Activated T-helper 1 cell treated with anti-CD3 and anti-CD28 coated beads, Interleukin-12 subunit alpha, Interleukin-12 subunit beta, Interleukin-2, Interleukin-4 antibody, amounts not matched to agents 30 ng/mL and 10 ng/mL and 1 ng/mL, durations not matched to agents 14 hours and 24 hours and 36 hours (primary cell): ENCODE measurements at regions of chr12 and their contacts with region 1.

Region 1: DNA sequence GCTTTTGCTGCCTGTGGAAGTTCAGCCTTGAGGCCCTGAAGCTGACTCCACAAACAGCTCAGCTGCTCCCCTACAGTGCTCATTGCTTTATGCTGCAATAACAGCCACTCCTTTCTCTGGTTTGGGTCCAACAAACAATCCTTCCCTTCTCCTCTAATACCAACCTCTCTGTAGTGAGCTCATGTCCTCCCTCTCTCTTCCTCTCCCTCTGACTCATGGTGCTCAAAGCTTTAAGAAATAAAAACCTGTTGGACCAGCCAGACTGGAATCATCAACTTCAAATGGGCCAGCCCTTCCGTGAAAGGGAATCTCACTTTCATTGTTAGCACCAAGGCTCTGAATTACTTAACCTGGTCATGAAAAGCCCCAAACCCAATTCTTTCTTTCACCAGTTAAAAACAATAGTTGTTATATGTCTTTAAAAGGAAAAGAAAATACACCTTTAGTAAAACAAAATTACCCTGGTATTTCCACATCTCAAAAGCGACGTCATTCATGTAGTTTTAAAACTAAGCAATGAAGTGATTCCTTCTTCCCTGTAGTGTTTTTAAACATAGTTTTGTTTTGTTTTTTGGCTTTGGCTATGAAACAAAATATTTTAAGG is 126.4 kb downstream of the DUSP6 start:
- DNase-seq: no peak
- H3K4me3 Mint-ChIP-seq: peak overlapping the region; percentile 73
- H3K27ac Mint-ChIP-seq: peak overlapping the region; percentile 99
- H3K4me1 Mint-ChIP-seq: peaks cover 82% of the 10 kb centered on the region
- H3K27me3 Mint-ChIP-seq: no peaks in the 10 kb centered on the region

Region 2: GRCh38 chr12:89019408-89020120 is 206.3 kb before region 1 on chr12:
- intact Hi-C with region 1: loop called (anchors 1 kb)
- DNase-seq: peak; percentile 73
- H3K4me3 Mint-ChIP-seq: no peak overlapping the region
- H3K27ac Mint-ChIP-seq: no peak overlapping the region
- H3K4me1 Mint-ChIP-seq: peaks cover 31% of the 10 kb centered on the region
- H3K27me3 Mint-ChIP-seq: peaks cover 12% of the 10 kb centered on the region

Region 3: DNA sequence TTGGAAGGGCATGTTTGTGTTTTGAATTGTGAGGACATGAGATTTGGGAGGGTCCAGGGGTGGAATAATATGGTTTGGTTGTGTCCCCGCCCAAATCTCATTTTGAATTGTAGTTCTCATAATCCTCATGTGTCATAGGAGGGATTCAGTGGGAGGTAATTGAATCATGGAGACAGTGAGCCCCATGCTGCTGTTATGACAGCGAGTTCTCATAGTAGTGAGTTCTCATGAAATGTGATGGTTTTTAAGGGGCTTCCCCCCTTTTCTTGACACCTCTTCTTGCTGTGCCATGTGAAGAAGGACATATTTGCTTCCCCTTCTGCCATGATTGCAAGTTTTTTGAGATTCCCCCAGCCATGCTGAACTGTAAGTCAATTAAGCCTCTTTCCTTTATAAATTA is 133.6 kb before region 1 on chr12:
- intact Hi-C with region 1: loop called (anchors 1 kb)
- DNase-seq: no peak
- H3K4me3 Mint-ChIP-seq: no peak overlapping the region
- H3K27ac Mint-ChIP-seq: peak overlapping the region; percentile 25
- H3K4me1 Mint-ChIP-seq: no peaks in the 10 kb centered on the region
- H3K27me3 Mint-ChIP-seq: no peaks in the 10 kb centered on the region

Region 4: GRCh38 chr12:89154743-89155499 is 71.0 kb before region 1 on chr12:
- intact Hi-C with region 1: no loop called
- DNase-seq: no peak
- H3K4me3 Mint-ChIP-seq: no peak overlapping the region
- H3K27ac Mint-ChIP-seq: no peak overlapping the region
- H3K4me1 Mint-ChIP-seq: peaks cover 27% of the 10 kb centered on the region
- H3K27me3 Mint-ChIP-seq: no peaks in the 10 kb centered on the region

Region 5: GRCh38 chr12:89210277-89210676 is 15.6 kb before region 1 on chr12:
- intact Hi-C with region 1: loop called (anchors 1 kb)
- DNase-seq: no peak
- H3K4me3 Mint-ChIP-seq: no peak overlapping the region
- H3K27ac Mint-ChIP-seq: no peak overlapping the region
- H3K4me1 Mint-ChIP-seq: peaks cover 50% of the 10 kb centered on the region
- H3K27me3 Mint-ChIP-seq: peaks cover 3% of the 10 kb centered on the region

Region 6: DNA sequence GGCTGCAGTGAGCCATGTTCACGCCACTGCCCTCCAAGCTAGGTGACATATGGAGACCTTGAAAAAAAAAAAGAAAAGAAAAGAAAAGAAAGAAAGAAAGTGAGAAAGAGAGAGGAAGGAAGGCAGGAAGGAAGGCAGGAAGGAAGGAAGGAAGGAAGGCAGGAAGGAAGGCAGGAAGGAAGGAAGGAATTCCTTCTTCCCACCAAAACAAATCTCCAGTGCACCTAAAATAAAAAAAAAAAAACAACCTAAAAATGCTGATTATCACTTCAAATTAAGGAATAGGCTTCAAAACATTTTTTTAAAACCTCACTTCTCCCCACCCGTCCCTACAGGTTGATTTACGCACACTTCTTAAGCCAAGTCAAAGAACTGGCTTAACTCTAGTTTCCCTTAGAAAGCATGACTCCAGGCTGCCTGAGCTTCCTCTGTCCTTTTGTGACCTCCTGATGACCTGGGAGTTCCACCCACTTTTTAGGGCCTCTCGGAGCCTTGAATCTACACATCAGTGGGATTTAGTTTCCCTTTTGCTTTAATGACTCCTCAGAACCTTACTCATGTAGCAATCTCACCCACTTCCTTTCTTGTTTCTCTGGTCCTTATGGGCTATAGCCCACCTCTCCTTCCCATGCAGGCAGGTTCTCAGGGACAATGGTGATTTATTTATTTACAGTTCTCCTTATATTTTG is 107.8 kb after region 1 on chr12:
- intact Hi-C with region 1: loop called (anchors 1 kb)
- DNase-seq: no peak
- H3K4me3 Mint-ChIP-seq: peak overlapping the region; percentile 46
- H3K27ac Mint-ChIP-seq: peak overlapping the region; percentile 76
- H3K4me1 Mint-ChIP-seq: peaks cover 26% of the 10 kb centered on the region
- H3K27me3 Mint-ChIP-seq: no peaks in the 10 kb centered on the region

Region 7: GRCh38 chr12:89384050-89384758 is 158.3 kb after region 1 on chr12:
- intact Hi-C with region 1: no loop called
- DNase-seq: no peak
- H3K4me3 Mint-ChIP-seq: no peak overlapping the region
- H3K27ac Mint-ChIP-seq: no peak overlapping the region
- H3K4me1 Mint-ChIP-seq: peaks cover 21% of the 10 kb centered on the region
- H3K27me3 Mint-ChIP-seq: peaks cover 2% of the 10 kb centered on the region

Region 8: GRCh38 chr12:89524541-89525285 is 298.8 kb after region 1 on chr12 and contains the start of gene GALNT4:
- intact Hi-C with region 1: loop called (anchors 1 kb)
- DNase-seq: peak; percentile 74
- H3K4me3 Mint-ChIP-seq: peak within 1 kb of the TSS; percentile 92
- H3K27ac Mint-ChIP-seq: peak within 1 kb of the TSS; percentile 94
- H3K4me1 Mint-ChIP-seq: peaks cover 45% of the 10 kb centered on the region
- H3K27me3 Mint-ChIP-seq: no peaks in the 10 kb centered on the region
- total RNA-seq, gene GALNT4: 8.7 TPM in 2 replicates